Right ventricle myocardium inferior (tissue), 1 donor: ENCODE measurements at regions of chr3 and their contacts with region 1.

Region 1: DNA sequence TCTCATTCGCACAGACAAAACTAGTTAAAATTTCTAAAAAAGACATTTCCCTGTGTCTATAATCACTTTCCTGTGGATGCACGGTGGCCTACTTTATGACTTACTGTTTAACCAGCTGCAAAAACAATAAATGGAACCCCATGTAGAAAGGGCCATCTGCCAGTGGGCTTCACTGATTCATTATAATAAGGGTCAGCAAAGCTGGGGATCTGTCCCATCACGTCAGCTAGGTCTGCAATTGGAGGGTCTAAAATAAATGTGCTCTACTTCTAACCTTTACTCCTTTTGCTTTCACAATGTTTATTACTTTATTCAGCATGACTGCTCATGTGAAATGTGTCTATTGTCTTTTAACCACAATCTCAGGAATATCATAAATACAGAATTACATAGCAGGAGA is 43.1 kb upstream of the NMD3 start:
- DNase-seq: no peak
- ATAC-seq: no peak

Region 2: GRCh38 chr3:161104561-161105551 is 73.1 kb before region 1 on chr3 and contains the start of gene B3GALNT1:
- intact Hi-C with region 1: loop called (anchors 5 kb)
- DNase-seq: peak; percentile 75
- ATAC-seq: peak; percentile 75
- total RNA-seq, gene B3GALNT1: 51.8 TPM

Region 3: DNA sequence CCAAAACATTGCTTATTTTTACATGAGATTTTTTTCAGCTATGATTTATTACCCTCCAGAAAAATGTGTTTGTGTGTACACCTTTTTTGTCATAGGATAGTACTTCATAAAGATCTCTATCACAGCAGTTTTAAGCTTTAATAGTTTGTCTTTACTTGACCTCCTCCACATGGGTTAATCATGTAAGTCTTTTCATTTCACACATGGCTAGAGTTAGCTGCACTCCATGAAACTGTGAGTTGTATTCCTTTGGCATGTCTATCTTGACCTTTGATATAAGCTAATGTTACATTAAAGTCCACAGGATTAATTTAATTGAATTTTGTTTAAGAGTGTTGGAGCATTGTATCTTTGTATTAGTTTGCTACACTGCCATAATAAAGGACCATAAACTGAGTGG is 535.7 kb after region 1 on chr3:
- intact Hi-C with region 1: no loop called
- DNase-seq: no peak
- ATAC-seq: no peak